Motor neuron (in vitro differentiated cells): ENCODE measurements at regions of chr4 and their contacts with region 1.

Region 1: GRCh38 chr4:7323872-7324650 is 110.7 kb downstream of the PSAPL1 start:
- ATAC-seq: peak in 6 of 8 experiments; percentile 15 to 73 (median 49)
- H3K4me3 ChIP-seq: no peak overlapping the region
- H3K27ac ChIP-seq: peak overlapping the region in 1 of 2 donors; percentile 40
- H3K4me1 ChIP-seq: peaks cover 6 to 7% of the 10 kb centered on the region in 2 donors

Region 2: GRCh38 chr4:7719354-7720174 is 395.5 kb after region 1 on chr4:
- in situ Hi-C with region 1: loop called in 1 of 9 experiments (anchors 25 kb)
- ATAC-seq: peak; percentile 89 to 98 (median 96)
- H3K4me3 ChIP-seq: peak overlapping the region in 1 of 5 donors; percentile 21
- H3K27ac ChIP-seq: no peak overlapping the region
- H3K4me1 ChIP-seq: peaks cover 5 to 6% of the 10 kb centered on the region in 2 donors